ENCODE measurements at regions of chr21 and their contacts with region 1.

Region 1: GRCh38 chr21:29098156-29098555 is 24.7 kb upstream of the CCT8 start:
- DNase-seq: no peak
- H3K4me3 ChIP-seq: no peak overlapping the region
- H3K27ac ChIP-seq: peak overlapping the region in 1 of 59 donors; percentile 52
- H3K27me3 ChIP-seq: no peaks in the 10 kb centered on the region
- CTCF ChIP-seq: no peak

Region 2: DNA sequence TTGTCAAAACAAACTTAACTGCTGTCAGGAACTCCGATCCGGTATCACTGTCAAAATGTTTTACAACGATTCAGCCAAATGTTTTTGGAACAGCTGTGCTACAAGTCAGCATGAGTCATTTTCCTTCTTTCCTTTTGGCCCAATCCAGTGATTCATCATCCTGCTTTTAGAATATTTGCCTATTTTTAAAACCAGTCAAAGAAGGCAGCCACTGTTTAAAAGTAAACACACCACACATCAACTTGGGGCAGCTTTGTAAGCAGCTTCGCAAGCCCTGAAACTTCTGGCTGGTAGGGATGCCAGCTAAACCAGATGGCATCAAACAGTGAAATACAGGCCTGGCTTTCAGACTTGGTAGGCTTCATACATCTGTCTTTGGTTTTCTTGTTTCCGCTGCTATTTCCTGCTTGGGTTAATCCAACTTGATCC is 47.2 kb after region 1 on chr21:
- intact Hi-C with region 1: loop called in 1 of 2 experiments (anchors 2 kb)
- DNase-seq: peak in 6 of 10 donors; percentile 30 to 61 (median 48)
- H3K4me3 ChIP-seq: no peak overlapping the region
- H3K27ac ChIP-seq: peak overlapping the region in 18 of 59 donors; percentile 4 to 78 (median 34)
- H3K27me3 ChIP-seq: no peaks in the 10 kb centered on the region
- CTCF ChIP-seq: no peak